A549 (cell line): ENCODE measurements at regions of chr9 and their contacts with region 1.

Region 1: GRCh38 chr9:137240861-137241489 is at the start of gene TUBB4B:
- DNase-seq: peak; percentile 99 to 100
- ATAC-seq: peak; percentile 61 to 78
- H3K4me3 ChIP-seq: peak within 1 kb of the TSS; percentile 91
- H3K27ac ChIP-seq: peak within 1 kb of the TSS; percentile 98 to 99
- H3K4me1 ChIP-seq: peaks cover 54% of the 10 kb centered on the region
- CTCF ChIP-seq: no peak
- EP300 ChIP-seq: no peak
- POLR2A ChIP-seq: peak; percentile 100
- RAD21 ChIP-seq: no peak
- polyA plus RNA-seq, gene TUBB4B: 256 and 268 TPM in 2 replicates

Region 2: DNA sequence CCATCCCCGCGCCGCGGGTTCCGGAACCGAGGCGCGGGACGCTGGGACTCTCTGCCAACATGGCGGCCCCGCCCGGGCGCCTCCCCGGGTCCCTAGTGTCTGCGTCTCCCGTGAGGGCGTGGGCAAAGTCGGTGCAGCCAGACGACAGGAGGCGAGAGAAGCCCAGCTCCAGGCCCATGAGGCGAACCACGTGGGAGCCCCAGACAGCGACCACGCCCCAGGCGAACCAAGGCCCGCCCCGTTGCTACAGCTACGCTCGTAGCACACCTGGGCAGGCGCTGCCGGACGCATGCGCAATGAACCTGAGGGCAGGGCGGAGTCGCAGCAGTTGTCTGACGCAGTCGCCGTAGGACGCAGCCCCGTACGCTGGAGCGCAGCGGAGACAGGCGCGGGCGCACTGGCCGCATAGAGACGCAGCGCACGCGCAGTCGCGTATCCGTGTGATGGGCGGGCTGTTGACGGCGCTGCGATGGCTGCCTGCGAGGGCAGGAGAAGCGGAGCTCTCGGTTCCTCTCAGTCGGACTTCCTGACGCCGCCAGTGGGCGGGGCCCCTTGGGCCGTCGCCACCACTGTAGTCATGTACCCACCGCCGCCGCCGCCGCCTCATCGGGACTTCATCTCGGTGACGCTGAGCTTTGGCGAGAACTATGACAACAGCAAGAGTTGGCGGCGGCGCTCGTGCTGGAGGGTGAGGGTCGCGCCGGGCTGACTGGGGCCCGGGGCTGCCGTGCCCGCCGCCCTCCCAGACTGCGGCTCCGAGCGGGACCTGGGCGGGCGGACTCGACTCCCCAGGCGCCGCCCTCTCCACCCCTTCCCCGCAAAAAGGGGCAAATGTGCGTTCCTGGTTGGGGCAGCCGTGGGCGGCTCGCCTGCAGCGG is 154.2 kb before region 1 on chr9 and contains the start of gene MAN1B1:
- CTCF ChIA-PET with region 1: interaction called, 8 read pairs
- POLR2A ChIA-PET with region 1: interaction called, 19 read pairs
- DNase-seq: peak; percentile 94 to 100
- ATAC-seq: peak; percentile 79 to 89
- H3K4me3 ChIP-seq: peak within 1 kb of the TSS; percentile 88
- H3K27ac ChIP-seq: peak within 1 kb of the TSS; percentile 95 to 100
- H3K4me1 ChIP-seq: peaks cover 41% of the 10 kb centered on the region
- CTCF ChIP-seq: no peak
- EP300 ChIP-seq: no peak
- POLR2A ChIP-seq: peak; percentile 89
- RAD21 ChIP-seq: no peak
- polyA plus RNA-seq, gene MAN1B1: 31.7 and 47.8 TPM in 2 replicates

Region 3: DNA sequence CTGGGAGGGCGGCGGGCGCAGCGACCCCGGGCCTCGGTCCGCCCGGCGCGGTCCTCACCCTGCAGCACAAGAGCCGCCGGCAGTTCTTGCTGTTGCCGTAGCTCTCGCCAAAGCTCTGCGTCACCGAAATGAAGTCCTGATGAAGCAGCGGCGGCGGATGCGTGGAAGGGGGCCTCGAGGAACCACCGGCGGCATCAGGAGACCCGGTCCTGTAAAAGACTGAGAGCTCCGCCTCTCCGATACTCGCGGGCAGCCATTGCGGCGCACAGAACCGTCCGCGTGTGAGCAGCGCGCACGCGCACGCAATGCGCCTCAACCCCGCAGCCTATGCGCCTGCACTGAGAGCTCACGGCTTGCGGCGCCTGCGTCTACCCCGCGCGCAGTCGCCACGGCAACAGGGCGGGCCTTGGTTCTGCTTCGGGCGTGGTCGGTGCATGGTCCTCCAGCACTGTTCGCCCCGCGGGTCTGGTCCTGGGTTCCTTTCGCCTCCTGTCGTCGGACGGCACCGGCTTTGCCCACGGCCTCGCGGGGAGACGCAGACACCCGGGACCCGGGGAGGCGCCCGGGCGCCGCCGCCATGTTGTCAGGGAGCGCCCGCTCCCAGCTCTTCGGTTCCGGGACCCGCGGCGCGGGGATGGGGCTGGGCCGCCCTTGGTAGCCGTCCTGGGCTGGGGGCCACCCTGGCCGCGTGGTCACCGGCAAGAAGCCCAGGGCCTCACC is 111.4 kb before region 1 on chr9:
- CTCF ChIA-PET with region 1: interaction called, 16 read pairs
- POLR2A ChIA-PET with region 1: interaction called, 23 read pairs
- DNase-seq: peak; percentile 93 to 95
- ATAC-seq: peak; percentile 95 to 96
- H3K4me3 ChIP-seq: peak overlapping the region; percentile 94
- H3K27ac ChIP-seq: peak overlapping the region; percentile 98
- H3K4me1 ChIP-seq: peaks cover 17% of the 10 kb centered on the region
- CTCF ChIP-seq: no peak
- EP300 ChIP-seq: no peak
- POLR2A ChIP-seq: peak; percentile 85
- RAD21 ChIP-seq: no peak

Region 4: DNA sequence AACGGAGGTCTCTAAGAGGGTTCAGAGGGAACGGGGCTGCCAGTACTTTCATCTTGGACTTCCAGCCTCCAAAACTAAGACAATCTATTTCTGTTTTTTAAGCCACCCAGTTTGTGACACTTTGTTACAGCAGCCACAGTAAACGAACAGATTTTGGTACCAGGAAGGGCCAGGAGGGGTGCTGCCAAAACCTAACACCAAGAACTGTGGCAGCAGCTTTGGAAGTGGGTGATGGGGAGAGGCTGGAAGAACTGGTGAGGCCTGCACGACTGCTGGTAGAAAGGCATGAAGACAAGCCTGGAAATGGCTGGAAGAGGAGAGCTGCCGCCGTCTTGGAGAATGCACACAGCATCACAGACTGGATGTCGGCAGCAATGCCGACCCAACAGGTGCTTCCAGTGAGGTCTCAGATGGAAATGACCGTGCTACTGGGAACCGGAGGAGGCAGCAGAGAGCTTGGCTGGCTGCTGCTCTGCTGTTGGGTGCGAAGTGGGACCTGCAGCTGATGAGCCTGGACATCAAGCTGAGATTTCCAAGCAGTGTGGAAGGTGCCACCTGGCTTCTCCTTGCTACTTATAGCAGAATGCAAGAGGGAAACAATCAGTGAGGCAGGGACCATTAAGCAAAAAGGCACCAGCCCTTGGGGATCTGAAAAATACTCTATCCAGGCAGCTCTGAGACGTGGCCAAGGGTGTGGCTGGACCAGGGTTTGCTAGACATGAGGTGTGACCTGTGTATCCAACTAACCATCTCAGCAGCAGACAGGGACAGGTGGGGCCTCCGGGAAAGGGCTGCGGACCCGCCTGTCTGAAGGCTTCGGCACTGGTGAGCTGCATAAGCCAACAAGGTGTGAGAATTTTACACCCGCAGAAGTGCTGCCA is 64.4 kb before region 1 on chr9:
- CTCF ChIA-PET with region 1: interaction called, 31 read pairs
- POLR2A ChIA-PET with region 1: interaction called, 7 read pairs
- DNase-seq: peak; percentile 73 to 91
- ATAC-seq: peak; percentile 78 to 85
- H3K4me3 ChIP-seq: no peak overlapping the region
- H3K27ac ChIP-seq: no peak overlapping the region
- H3K4me1 ChIP-seq: no peaks in the 10 kb centered on the region
- CTCF ChIP-seq: peak; percentile 54
- EP300 ChIP-seq: no peak
- POLR2A ChIP-seq: no peak
- RAD21 ChIP-seq: peak; percentile 24 to 48; a peak in 2 of 5 replicates

Region 5: GRCh38 chr9:137200311-137201204 is 40.4 kb before region 1 on chr9 and contains the start of gene TPRN:
- CTCF ChIA-PET with region 1: interaction called, 25 read pairs
- POLR2A ChIA-PET with region 1: interaction called, 15 read pairs
- DNase-seq: peak; percentile 98 to 100
- ATAC-seq: peak; percentile 87 to 96
- H3K4me3 ChIP-seq: peak within 1 kb of the TSS; percentile 60
- H3K27ac ChIP-seq: peak within 1 kb of the TSS; percentile 80 to 87
- H3K4me1 ChIP-seq: peaks cover 38% of the 10 kb centered on the region
- CTCF ChIP-seq: no peak
- EP300 ChIP-seq: no peak
- POLR2A ChIP-seq: peak; percentile 82
- RAD21 ChIP-seq: no peak
- polyA plus RNA-seq, gene TPRN: 2.1 and 2.4 TPM in 2 replicates

Region 6: DNA sequence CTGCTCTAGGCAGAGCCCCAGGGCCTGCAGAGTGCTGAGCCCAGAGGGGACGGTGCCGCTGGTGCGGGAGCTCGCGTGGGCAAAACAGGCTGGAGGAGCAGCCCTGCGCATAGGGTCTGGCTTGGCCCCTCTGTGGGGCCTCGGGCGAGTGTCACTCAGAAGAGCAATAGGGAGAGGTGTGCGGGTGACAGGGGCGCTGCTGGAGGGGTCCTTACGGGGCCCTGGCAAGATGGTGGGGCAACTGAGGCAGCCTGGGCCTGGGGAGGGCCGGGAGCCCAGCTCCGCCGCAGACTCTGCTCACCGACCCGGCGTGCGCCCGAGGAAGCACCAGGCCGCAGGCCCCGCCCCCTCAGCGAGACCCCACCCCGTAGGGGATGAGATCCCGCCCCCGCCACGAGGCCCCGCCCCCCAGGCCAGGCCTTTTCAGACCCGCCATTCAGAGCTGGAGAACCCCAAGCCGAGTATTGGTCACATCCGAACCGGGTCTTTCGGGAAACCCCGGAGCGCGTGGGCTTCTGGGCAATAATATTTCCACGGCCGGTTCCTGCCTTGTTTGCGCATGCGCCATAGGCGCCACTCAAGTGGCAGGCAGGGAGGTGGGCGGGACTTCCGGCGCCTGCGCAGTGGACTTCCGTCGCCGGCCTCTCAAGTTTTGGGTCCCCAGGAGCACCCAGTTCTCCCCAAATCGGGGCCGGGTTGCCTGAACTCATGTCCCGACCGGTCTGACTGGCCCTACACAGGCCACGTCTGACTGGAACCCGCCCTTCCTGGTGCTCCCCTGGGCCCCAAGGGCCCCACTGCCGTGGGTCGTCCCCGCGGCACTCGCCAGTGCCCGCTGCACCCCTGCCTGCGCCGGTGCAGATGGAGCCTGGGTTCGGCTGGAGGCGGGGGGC is 17.7 kb before region 1 on chr9:
- CTCF ChIA-PET with region 1: interaction called, 102 read pairs
- POLR2A ChIA-PET with region 1: interaction called, 37 read pairs
- DNase-seq: peak; percentile 95 to 98
- ATAC-seq: peak; percentile 44 to 76
- H3K4me3 ChIP-seq: peak overlapping the region; percentile 72
- H3K27ac ChIP-seq: peak overlapping the region; percentile 89 to 93
- H3K4me1 ChIP-seq: peaks cover 66% of the 10 kb centered on the region
- CTCF ChIP-seq: no peak
- EP300 ChIP-seq: no peak
- POLR2A ChIP-seq: peak; percentile 60
- RAD21 ChIP-seq: no peak

Region 7: DNA sequence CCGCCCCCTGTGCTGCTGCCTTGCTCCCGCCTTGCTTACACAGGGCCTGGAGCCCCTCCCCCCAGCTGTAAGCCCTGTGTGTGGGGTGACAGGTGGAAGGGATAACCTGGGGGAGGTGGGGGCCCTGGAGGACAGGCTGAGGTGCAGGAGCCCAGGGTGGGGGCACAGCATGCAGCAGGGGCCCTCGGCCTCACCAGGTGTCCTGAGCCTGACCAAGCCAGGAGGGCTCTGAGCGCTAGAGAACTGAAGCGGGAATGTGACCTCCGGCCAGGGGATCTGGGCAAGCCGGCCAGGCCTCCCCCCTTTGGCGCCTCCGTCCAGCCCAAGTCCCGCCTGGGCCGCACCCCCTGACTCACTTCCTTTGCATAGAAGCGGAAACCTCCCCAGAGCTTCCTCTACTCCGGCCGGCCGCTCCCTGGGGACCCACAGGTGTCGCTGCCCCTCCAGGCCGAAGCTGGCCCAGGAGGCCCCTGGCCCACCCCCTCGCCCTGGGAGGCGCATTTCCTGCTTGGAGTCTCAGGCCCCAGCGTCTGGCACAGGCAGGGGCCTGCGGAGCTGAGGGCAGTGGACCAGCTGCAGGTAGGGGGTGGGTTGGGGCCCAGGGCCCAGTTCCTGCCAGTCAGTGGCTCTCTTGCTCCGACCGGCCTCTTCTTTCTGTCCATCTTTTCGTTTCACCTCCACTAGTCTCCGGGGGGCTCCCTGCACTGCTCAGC is 36.5 kb after region 1 on chr9 and contains the start of gene TOR4A:
- CTCF ChIA-PET with region 1: interaction called, 10 read pairs
- POLR2A ChIA-PET with region 1: interaction called, 29 read pairs
- DNase-seq: peak; percentile 89 to 92
- ATAC-seq: peak; percentile 79 to 89
- H3K4me3 ChIP-seq: peak within 1 kb of the TSS; percentile 72
- H3K27ac ChIP-seq: peak within 1 kb of the TSS; percentile 94 to 96
- H3K4me1 ChIP-seq: peaks cover 35% of the 10 kb centered on the region
- CTCF ChIP-seq: peak; percentile 33; the same call in 1 of the 3 replicates
- EP300 ChIP-seq: peak in 1 of 2 experiments; percentile 15; a peak in 1 of 5 replicates
- POLR2A ChIP-seq: peak; percentile 56
- RAD21 ChIP-seq: peak in 1 of 2 experiments; percentile 29; a peak in 3 of 5 replicates
- polyA plus RNA-seq, gene TOR4A: 8.7 and 9.8 TPM in 2 replicates